Vagina (tissue), 2 donors: ENCODE measurements at regions of chr1 and their contacts with region 1.

Region 1: GRCh38 chr1:5570926-5571325 is 421.3 kb downstream of the NPHP4 start:
- DNase-seq: no peak
- H3K4me3 ChIP-seq: no peak overlapping the region
- H3K27ac ChIP-seq: no peak overlapping the region
- H3K4me1 ChIP-seq: no peaks in the 10 kb centered on the region
- H3K27me3 ChIP-seq: no peaks in the 10 kb centered on the region
- CTCF ChIP-seq: no peak
- POLR2A ChIP-seq: no peak

Region 2: DNA sequence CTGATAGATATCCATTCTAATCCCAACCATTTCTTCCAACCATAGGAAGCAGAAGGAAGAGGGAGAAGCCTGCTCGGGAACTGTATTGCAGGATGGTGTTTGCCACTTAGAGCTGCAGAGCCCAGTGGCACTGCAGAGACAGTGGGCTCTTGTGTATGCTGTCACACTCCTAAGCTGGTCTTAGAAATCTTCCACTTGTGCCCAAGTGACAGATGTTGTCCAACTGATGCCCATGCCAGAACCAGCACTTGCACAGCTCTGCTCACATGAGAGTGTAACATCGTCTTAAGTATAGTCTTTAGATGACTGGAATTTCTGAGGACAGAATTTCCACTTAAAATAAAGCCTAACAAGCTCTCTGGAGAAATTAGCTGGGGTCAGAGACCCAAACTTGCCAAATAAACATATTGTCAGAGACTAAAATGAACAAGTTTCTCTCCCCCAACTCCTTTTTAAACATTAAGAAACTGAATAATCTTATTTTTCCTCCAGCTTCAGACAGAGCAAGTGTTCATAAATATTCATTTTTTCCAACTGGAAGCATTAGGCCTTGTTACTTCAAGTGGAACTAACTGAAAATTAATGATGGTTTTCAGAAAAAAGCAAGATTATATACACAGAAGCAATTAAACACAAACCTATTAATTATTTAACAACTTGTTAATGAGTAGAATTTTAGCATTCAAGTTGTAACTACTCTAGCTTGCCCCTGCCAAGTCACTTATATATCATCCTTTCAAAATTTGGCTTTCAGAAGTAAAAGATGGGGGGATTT is 339.2 kb before region 1 on chr1:
- intact Hi-C with region 1: no loop called
- DNase-seq: no peak
- H3K4me3 ChIP-seq: no peak overlapping the region
- H3K27ac ChIP-seq: no peak overlapping the region
- H3K4me1 ChIP-seq: no peaks in the 10 kb centered on the region
- H3K27me3 ChIP-seq: no peaks in the 10 kb centered on the region
- CTCF ChIP-seq: no peak
- POLR2A ChIP-seq: no peak

Region 3: GRCh38 chr1:5597991-5598823 is 27.3 kb after region 1 on chr1:
- intact Hi-C with region 1: loop called (anchors 2 kb)
- DNase-seq: peak; percentile 52 to 87
- H3K4me3 ChIP-seq: no peak overlapping the region
- H3K27ac ChIP-seq: no peak overlapping the region
- H3K4me1 ChIP-seq: no peaks in the 10 kb centered on the region
- H3K27me3 ChIP-seq: no peaks in the 10 kb centered on the region
- CTCF ChIP-seq: no peak
- POLR2A ChIP-seq: no peak